ENCODE measurements at regions of chr1 and their contacts with region 1.

Region 1: DNA sequence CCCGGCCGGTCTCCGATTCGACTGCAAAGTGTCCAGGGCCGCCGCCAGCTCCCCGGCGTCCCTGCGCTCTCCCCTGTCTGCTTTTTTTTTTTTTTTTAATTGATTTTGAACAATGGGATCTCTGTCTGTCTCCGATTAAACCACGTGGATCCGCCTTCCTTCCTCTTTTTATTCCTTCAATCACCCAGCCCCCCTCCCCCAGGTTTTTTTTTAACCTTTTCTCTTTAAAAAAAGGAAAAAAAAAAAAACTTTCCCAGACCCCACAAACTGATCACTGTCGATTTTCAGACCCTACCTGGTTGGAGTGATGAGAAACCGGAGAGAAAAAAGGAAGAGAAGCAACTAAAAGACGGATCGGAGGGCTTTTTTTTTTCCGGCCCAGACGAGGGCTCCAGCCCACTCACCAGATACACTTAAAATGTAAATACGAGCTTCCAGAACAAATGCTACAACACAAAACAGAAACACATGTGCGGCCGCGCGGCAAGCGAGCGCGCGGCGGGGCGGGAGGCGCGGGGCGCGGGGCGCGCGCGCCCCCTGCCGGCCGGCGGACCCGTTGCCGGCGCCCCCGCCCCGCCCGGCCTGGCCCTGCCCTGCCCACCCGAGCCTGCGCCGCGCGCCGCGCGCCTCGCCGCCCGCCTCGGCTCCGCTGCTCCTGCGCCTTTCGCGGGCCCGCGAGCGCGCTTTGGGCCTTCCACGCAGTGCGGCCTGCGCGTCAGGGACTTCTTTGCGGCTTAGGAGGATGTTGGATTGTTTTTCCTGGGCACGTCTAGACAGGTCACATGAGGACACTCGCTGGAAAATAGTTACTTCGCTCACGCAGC is at the start of gene RCC2:
- DNase-seq: peak; percentile 63 to 80 (median 74)
- ATAC-seq: peak; percentile 91
- H3K4me3 ChIP-seq: peak within 1 kb of the TSS; percentile 94
- H3K4me3 Mint-ChIP-seq: peak within 1 kb of the TSS; percentile 92 to 99 (median 96)
- H3K27ac ChIP-seq: peak within 1 kb of the TSS; percentile 86
- H3K27ac Mint-ChIP-seq: peak within 1 kb of the TSS; percentile 87 to 98 (median 96)
- H3K4me1 ChIP-seq: peaks cover 14 to 19% of the 10 kb centered on the region in 2 donors
- H3K4me1 Mint-ChIP-seq: peaks cover 17 to 54% (median 43%) of the 10 kb centered on the region in 7 donors
- H3K27me3 ChIP-seq: no peaks in the 10 kb centered on the region
- H3K27me3 Mint-ChIP-seq: no peaks in the 10 kb centered on the region
- total RNA-seq, gene RCC2: 42.1 to 130 (median 46.0) TPM

Region 2: DNA sequence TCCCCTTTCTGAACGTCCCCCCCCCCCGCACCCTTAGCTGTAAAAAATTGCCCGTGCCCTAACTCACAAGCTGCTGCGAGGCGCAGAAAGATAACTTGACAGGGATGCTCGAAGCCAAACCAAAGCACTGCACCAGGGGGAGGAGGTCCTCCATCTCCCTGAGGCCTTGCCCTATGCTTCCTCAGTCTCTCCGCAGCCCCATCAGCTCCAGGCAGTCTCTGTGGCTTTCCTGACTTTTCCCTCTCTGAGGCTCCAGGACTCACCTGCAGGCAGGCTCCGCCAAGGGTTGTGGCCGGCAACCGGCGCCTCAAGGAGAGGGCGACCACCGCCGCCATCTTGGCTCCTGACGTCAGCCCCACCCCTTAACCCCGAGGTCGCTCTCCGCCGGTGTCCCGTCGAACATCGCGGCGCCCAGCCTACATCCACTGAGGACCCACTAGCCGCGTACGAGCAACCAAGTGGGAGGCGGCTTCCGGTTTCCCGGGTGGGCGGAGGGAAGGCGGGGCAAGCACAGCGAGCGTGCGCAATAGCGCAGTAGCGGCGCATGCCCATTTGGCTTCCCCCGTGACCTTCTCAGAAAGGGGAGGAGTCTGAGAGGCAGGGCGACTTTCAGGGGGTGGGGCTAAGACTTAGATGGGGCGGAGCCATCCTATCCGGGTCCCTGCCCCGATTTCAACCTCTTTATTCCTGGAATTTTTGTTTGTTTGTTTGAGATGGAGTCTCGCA is 385.6 kb before region 1 on chr1 and contains the start of gene SDHB:
- CTCF ChIA-PET with region 1: no interaction called
- POLR2A ChIA-PET with region 1: no interaction called
- intact Hi-C with region 1: loop called in 1 of 2 experiments (anchors 2 kb)
- DNase-seq: peak; percentile 97 to 100 (median 100)
- ATAC-seq: peak; percentile 99
- H3K4me3 ChIP-seq: peak within 1 kb of the TSS; percentile 77
- H3K4me3 Mint-ChIP-seq: peak within 1 kb of the TSS; percentile 87 to 99 (median 98)
- H3K27ac ChIP-seq: peak within 1 kb of the TSS; percentile 81
- H3K27ac Mint-ChIP-seq: peak within 1 kb of the TSS; percentile 94 to 99 (median 97)
- H3K4me1 ChIP-seq: peaks cover 13 to 14% of the 10 kb centered on the region in 2 donors
- H3K4me1 Mint-ChIP-seq: peaks cover 8 to 39% (median 33%) of the 10 kb centered on the region in 7 donors
- H3K27me3 ChIP-seq: no peaks in the 10 kb centered on the region
- H3K27me3 Mint-ChIP-seq: peaks cover 0 to 7% (median 6%) of the 10 kb centered on the region in 5 donors
- total RNA-seq, gene SDHB: 53.3 to 81.3 (median 61.1) TPM

Region 3: DNA sequence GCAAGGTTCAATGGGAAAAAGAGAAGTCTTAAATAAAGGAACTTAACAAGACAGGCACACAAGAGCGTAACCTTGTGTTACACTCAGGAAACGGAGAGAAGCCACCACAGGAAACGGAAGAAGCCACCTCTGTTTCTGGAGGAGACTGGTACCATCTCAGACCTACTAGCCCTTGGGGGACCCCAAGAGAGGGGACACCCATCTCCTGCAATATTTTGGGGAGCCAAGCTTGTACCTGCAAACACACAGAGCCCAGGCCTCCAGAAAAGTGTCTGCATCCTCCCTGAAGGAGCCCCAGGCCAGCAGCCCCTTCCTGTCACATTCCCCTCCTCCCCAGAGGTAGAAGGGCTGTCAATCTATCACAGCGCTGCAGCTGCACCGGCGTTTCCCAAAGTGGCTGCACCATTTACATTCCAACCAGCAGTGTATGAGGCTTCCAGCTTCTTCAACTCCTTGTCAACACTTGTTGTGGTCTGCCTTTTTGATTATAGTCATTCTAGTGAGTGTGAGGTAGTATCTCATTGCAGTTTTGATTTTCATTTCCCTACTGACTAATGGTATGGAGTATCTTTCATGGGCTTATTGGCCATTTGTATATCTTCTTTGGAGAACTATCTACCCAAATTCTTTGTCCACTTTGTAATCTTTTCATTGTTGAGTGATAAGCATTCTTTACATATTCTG is 257.5 kb before region 1 on chr1:
- CTCF ChIA-PET with region 1: no interaction called
- POLR2A ChIA-PET with region 1: no interaction called
- intact Hi-C with region 1: no loop called
- DNase-seq: peak in 4 of 9 donors; percentile 37 to 54 (median 42)
- ATAC-seq: peak; percentile 57
- H3K4me3 ChIP-seq: peak overlapping the region; percentile 8
- H3K4me3 Mint-ChIP-seq: peak overlapping the region; percentile 6 to 85 (median 74)
- H3K27ac ChIP-seq: peak overlapping the region; percentile 39
- H3K27ac Mint-ChIP-seq: peak overlapping the region in 7 of 9 donors; percentile 34 to 80 (median 62)
- H3K4me1 ChIP-seq: peaks cover 13 to 22% of the 10 kb centered on the region in 2 donors
- H3K4me1 Mint-ChIP-seq: peaks cover 26 to 78% (median 55%) of the 10 kb centered on the region in 7 donors
- H3K27me3 ChIP-seq: no peaks in the 10 kb centered on the region
- H3K27me3 Mint-ChIP-seq: peaks cover 0 to 37% (median 7%) of the 10 kb centered on the region in 5 donors

Region 4: GRCh38 chr1:17460245-17460644 is 20.8 kb after region 1 on chr1:
- CTCF ChIA-PET with region 1: no interaction called
- POLR2A ChIA-PET with region 1: no interaction called
- intact Hi-C with region 1: no loop called
- DNase-seq: no peak
- ATAC-seq: no peak
- H3K4me3 ChIP-seq: no peak overlapping the region
- H3K4me3 Mint-ChIP-seq: no peak overlapping the region
- H3K27ac ChIP-seq: no peak overlapping the region
- H3K27ac Mint-ChIP-seq: no peak overlapping the region
- H3K4me1 ChIP-seq: no peaks in the 10 kb centered on the region
- H3K4me1 Mint-ChIP-seq: no peaks in the 10 kb centered on the region
- H3K27me3 ChIP-seq: no peaks in the 10 kb centered on the region
- H3K27me3 Mint-ChIP-seq: peaks cover 0 to 12% (median 3%) of the 10 kb centered on the region in 5 donors

Region 5: GRCh38 chr1:17475729-17476128 is 36.3 kb after region 1 on chr1:
- CTCF ChIA-PET with region 1: no interaction called
- POLR2A ChIA-PET with region 1: no interaction called
- intact Hi-C with region 1: loop called in 1 of 2 experiments (anchors 5 kb)
- DNase-seq: no peak
- ATAC-seq: no peak
- H3K4me3 ChIP-seq: no peak overlapping the region
- H3K4me3 Mint-ChIP-seq: no peak overlapping the region
- H3K27ac ChIP-seq: no peak overlapping the region
- H3K27ac Mint-ChIP-seq: no peak overlapping the region
- H3K4me1 ChIP-seq: no peaks in the 10 kb centered on the region
- H3K4me1 Mint-ChIP-seq: no peaks in the 10 kb centered on the region
- H3K27me3 ChIP-seq: no peaks in the 10 kb centered on the region
- H3K27me3 Mint-ChIP-seq: peaks cover 0 to 3% (median 0%) of the 10 kb centered on the region in 5 donors

Region 6: DNA sequence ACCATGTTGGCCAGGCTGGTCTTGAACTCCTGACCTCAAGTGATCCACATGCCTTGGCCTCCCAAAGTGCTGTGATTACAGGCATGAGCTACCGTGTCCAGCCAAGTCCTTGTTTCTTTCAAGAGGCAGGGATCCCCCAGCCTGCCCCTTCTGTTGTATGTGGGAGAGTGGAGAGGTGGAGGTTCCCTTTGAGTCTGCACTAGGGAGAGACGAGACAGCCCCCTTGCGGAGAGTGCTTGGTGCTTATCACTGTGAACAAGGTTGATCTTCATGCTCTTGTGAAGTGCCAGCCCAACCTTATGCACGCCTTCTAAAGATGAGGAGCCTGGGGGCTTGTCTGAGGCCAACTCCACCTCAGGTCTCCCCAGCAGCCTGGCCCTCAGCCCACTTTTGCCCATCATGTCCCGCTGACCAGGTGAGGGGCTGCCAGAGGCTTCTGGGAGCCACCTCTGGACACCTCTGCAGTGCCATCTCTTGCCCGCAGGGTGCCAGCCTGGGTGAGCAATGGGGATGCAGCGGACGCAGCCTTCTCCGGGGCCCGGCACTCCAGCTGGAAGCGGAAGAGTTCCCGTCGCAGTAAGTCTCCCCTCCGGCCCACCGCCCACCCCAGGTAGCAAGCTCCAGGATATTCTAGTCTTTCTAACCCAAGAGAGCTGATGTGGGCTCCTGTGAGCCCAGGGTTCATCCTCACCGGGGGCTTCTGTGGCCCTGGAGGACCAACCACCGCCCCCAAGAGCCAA is 162.4 kb after region 1 on chr1:
- CTCF ChIA-PET with region 1: interaction called, 10 read pairs
- POLR2A ChIA-PET with region 1: no interaction called
- intact Hi-C with region 1: no loop called
- DNase-seq: no peak
- ATAC-seq: no peak
- H3K4me3 ChIP-seq: no peak overlapping the region
- H3K4me3 Mint-ChIP-seq: no peak overlapping the region
- H3K27ac ChIP-seq: no peak overlapping the region
- H3K27ac Mint-ChIP-seq: no peak overlapping the region
- H3K4me1 ChIP-seq: no peaks in the 10 kb centered on the region
- H3K4me1 Mint-ChIP-seq: peaks cover 0 to 8% (median 0%) of the 10 kb centered on the region in 7 donors
- H3K27me3 ChIP-seq: no peaks in the 10 kb centered on the region
- H3K27me3 Mint-ChIP-seq: peaks cover 0 to 7% (median 0%) of the 10 kb centered on the region in 5 donors